ENCODE measurements at regions of chr7 and their contacts with region 1.

Region 1: GRCh38 chr7:103296901-103297836 is at the start of gene PMPCB:
- DNase-seq: peak; percentile 94 to 96 (median 96)
- ATAC-seq: peak; percentile 98 to 99 (median 99)
- H3K4me3 ChIP-seq: peak within 1 kb of the TSS; percentile 65 to 95 (median 82)
- H3K27ac ChIP-seq: peak within 1 kb of the TSS; percentile 77 to 89 (median 84)
- H3K4me1 ChIP-seq: peaks cover 0 to 19% (median 6%) of the 10 kb centered on the region in 4 donors
- H3K27me3 ChIP-seq: no peaks in the 10 kb centered on the region
- CTCF ChIP-seq: peak; percentile 95 to 98 (median 96)
- POLR2A ChIP-seq: peak; percentile 77
- total RNA-seq, gene PMPCB: 39.7 to 45.0 (median 44.0) TPM

Region 2: DNA sequence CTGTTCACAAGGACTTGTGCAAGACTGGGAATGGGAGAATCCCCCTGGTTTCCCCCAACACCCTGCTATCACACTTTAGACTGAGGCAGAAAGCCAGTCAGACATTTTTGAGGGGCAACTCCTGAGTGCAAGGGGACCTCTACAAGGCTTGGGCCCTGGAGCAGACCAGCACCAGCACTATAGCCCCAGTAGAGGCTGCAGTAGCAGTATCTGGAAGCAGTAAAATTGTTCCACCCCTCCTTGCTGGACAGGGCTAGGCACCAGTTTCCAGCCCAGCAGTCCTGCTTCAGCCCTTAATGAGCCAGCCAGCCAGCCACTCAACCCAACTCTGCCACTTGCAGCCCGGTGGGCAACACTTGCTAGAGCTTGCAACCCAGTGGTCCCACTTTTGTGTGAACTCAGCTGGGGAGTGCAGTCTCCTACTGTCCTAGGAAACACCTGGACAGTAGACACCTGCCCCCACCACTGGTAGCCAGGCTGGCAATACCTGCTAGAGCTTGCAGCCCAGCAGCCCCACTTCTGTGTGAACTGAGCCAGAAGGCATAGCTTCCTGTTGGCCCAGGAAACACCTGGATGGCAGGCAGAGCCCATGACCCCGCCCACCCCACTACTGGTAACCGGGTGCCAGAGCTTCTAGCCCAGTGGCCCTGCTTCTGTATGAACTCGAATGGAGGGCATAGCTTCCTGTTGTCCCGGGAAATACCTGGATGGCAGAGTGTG is 287.5 kb before region 1 on chr7:
- intact Hi-C with region 1: no loop called
- DNase-seq: no peak
- ATAC-seq: no peak
- H3K4me3 ChIP-seq: no peak overlapping the region
- H3K27ac ChIP-seq: no peak overlapping the region
- H3K4me1 ChIP-seq: no peaks in the 10 kb centered on the region
- H3K27me3 ChIP-seq: no peaks in the 10 kb centered on the region
- CTCF ChIP-seq: no peak
- POLR2A ChIP-seq: no peak

Region 3: DNA sequence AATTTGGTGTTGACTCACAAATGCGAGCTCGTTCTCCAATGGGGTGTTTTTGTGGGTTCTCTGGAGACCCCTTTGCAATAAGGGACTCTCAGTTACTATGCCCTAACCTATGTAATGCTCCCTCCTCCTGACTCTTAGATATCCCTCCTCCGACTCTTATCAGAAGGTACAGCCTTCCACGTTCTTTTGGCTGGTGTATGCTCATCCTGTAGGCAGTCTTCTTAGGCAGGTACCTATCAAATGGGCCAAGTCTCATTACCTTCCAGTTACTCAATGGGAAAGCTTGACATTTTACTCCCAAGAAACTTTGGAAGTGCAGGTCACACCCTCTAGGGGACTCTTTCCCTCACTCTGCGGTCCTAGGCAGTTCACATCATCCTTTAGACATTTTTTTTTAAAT is 116.2 kb after region 1 on chr7:
- intact Hi-C with region 1: loop called in 1 of 2 experiments (anchors 5 kb)
- DNase-seq: no peak
- ATAC-seq: no peak
- H3K4me3 ChIP-seq: no peak overlapping the region
- H3K27ac ChIP-seq: no peak overlapping the region
- H3K4me1 ChIP-seq: no peaks in the 10 kb centered on the region
- H3K27me3 ChIP-seq: no peaks in the 10 kb centered on the region
- CTCF ChIP-seq: no peak
- POLR2A ChIP-seq: no peak

Region 4: GRCh38 chr7:103532955-103533354 is 235.8 kb after region 1 on chr7:
- intact Hi-C with region 1: no loop called
- DNase-seq: no peak
- ATAC-seq: no peak
- H3K4me3 ChIP-seq: no peak overlapping the region
- H3K27ac ChIP-seq: no peak overlapping the region
- H3K4me1 ChIP-seq: no peaks in the 10 kb centered on the region
- H3K27me3 ChIP-seq: no peaks in the 10 kb centered on the region
- CTCF ChIP-seq: no peak
- POLR2A ChIP-seq: no peak

Measured in right lobe of liver (tissue), 6 donors.